ENCODE measurements at regions of chr7 and their contacts with region 1.

Region 1: DNA sequence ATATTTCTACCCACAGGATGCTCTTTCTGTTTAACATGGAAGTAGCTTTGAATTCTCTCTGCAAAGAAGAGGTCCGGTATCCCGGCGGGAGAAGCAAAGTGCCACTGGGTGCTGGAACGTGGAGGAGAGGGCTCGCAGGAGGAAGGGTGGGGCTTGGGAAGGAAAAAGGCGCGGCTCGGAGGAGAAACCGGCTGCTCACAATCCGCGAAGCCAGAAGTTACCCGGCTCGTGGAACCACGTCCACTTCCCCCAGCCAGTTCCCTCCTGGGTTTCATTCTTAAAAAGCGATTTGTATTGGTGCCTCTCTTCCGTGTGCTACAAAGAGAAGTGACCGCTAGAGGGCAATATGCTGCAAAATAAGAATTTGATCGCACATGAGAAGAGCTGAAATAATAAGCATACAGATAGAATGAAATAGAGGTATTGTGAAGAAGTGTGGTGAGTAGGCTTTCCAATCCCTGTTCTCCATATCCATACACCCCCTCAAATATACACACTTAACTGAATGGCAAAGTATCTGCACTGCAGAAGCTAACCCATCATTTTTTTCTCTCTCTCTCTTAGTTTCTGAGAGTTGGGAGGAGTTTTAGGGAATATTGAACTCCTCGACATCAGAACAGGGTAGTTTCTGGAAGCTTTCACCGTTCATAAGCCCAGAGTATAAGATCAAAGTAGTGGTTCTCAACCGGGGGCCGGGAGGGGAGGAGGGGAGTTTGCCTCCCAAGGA is 31.1 kb downstream of the TRIL start:
- DNase-seq: peak; percentile 77
- CTCF ChIP-seq: peak; percentile 82

Region 2: GRCh38 chr7:28840592-28840995 is 86.4 kb before region 1 on chr7:
- CTCF ChIA-PET with region 1: no interaction called
- POLR2A ChIA-PET with region 1: no interaction called
- DNase-seq: peak; percentile 34
- CTCF ChIP-seq: peak; percentile 12

Region 3: DNA sequence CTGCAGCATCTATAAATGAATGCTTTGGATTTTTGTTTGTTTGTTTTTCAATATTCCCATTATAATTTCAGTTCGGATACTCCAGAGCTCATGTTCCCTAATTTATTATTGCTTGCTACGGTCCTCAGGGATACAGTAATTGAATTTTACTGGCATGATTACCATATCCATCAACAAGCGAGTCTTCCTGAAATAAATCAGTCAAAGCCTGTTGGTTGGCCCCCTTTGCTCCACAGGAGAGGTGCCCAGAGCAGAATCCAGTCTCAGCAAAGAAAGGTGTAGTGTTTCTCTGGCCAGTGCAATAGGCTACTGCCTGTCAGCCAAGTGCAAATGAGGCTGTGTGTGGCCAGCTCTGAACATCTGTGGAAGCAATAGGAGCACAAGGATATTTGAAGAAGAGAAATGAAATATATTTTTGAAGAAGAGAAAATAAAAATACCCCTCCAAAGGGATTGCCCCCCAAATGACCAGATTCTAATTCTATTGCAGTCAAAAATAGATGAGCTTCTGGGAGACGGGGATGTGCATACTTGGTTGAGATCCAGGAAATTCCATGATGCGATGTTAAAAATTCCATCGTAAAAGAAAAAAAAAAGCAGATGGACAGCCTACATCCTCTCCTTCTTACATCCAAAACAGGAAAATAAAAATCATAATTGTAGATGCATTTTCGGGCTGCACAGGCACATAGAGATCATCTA is 13.0 kb after region 1 on chr7:
- CTCF ChIA-PET with region 1: interaction called, 167 read pairs
- POLR2A ChIA-PET with region 1: no interaction called
- DNase-seq: no peak
- CTCF ChIP-seq: no peak

Region 4: DNA sequence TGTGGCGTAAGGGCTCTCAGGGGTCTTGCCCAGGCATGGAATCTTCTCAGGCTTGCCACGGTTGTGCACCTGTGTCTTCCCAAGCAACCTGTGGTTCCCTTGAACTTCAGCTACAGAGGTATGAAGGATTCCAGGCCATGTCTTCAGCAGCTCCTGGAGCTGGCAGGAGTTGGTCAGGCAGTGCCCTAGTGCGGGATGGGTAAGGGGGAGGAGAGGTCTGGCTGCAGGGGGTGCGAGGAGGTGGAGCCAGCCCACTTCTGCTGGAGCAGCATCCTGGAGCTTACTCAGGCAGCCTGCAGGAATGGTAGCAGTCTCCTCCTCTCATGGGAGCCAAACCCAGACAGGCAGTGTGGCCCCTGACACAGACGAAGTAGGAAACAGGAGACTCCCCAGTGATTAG is 34.9 kb after region 1 on chr7:
- CTCF ChIA-PET with region 1: interaction called, 11 read pairs
- POLR2A ChIA-PET with region 1: no interaction called
- DNase-seq: no peak
- CTCF ChIP-seq: no peak

Region 5: GRCh38 chr7:29105752-29106668 is 179.0 kb after region 1 on chr7:
- CTCF ChIA-PET with region 1: interaction called, 416 read pairs
- POLR2A ChIA-PET with region 1: no interaction called
- DNase-seq: peak; percentile 28
- CTCF ChIP-seq: peak; percentile 84

Region 6: GRCh38 chr7:29408841-29409243 is 481.8 kb after region 1 on chr7:
- CTCF ChIA-PET with region 1: interaction called, 130 read pairs
- POLR2A ChIA-PET with region 1: no interaction called
- DNase-seq: peak; percentile 66
- CTCF ChIP-seq: peak; percentile 83

Measured in GM10248 (cell line).